ENCODE measurements at regions of chr22 and their contacts with region 1.

Region 1: DNA sequence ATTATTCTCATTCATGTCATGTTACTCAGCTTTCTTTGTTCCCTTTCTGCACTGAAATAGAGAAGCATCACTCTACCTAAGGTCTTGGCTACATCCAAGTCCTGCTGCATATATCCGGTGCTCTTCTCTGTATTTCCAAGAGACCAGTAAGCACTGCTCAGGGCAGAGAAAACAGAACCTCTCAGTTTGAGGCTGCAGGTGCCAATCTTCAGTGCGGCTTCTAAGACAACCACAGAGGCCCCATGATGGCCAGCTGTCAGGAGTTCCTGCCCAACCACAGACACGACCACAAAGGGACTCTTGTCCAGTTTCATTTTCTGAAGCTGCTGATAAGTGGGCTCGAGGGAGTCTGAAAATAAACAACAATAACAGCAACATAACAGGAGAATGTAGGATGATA is 378.4 kb upstream of the PITPNB start:
- DNase-seq: no peak
- ATAC-seq: peak in 1 of 8 donors; percentile 5
- H3K4me3 ChIP-seq: no peak overlapping the region
- H3K27ac ChIP-seq: no peak overlapping the region
- H3K4me1 ChIP-seq: peaks cover 0 to 42% (median 28%) of the 10 kb centered on the region in 9 donors
- H3K27me3 ChIP-seq: no peaks in the 10 kb centered on the region
- CTCF ChIP-seq: no peak

Region 2: GRCh38 chr22:28105413-28105812 is 192.1 kb before region 1 on chr22:
- intact Hi-C with region 1: loop called in 1 of 10 experiments (anchors 10 kb)
- DNase-seq: peak in 1 of 2 donors; percentile 13
- ATAC-seq: peak in 7 of 8 donors; percentile 43 to 76 (median 54)
- H3K4me3 ChIP-seq: no peak overlapping the region
- H3K27ac ChIP-seq: peak overlapping the region in 4 of 10 donors; percentile 12 to 48 (median 25)
- H3K4me1 ChIP-seq: peaks cover 0 to 35% (median 13%) of the 10 kb centered on the region in 9 donors
- H3K27me3 ChIP-seq: no peaks in the 10 kb centered on the region
- CTCF ChIP-seq: no peak

Region 3: DNA sequence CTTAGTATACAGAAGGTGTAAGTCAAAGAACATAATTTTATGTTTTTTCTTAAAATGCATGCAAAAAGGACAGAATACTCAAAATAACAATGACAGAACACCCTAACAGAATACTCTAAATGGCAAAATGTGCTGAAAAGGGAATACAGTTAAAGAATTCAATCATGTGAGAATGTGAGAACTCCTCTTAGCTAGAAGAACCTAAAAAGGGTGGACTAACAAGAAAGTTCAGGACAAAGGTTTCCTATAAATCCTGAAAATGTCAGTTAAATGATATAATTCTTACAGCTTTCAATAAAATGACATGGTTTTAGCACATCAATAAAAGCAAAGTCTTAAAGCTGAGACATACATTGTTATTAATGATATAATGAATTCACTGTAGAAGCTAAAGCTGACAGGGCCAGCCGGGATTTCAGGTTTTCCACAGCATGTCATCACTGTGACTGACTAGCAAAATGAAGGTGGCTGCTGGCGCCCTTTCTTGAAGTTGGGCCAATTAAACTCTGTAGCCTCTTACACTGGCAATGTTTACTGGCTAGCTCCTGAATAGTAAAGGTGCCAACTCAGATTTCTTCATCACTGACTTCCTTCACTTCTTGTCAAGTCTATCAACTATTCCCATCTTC is 137.8 kb after region 1 on chr22:
- intact Hi-C with region 1: loop called in 1 of 10 experiments (anchors 5 kb)
- DNase-seq: peak in 1 of 2 donors; percentile 56
- ATAC-seq: peak; percentile 65 to 90 (median 84)
- H3K4me3 ChIP-seq: no peak overlapping the region
- H3K27ac ChIP-seq: peak overlapping the region in 3 of 10 donors; percentile 35 to 55 (median 47)
- H3K4me1 ChIP-seq: peaks cover 3 to 59% (median 34%) of the 10 kb centered on the region in 9 donors
- H3K27me3 ChIP-seq: no peaks in the 10 kb centered on the region
- CTCF ChIP-seq: no peak

Measured in heart right ventricle (tissue), 16 donors.